ENCODE measurements at regions of chr12 and their contacts with region 1.

Region 1: GRCh38 chr12:121823101-121823726 is 19.4 kb downstream of the SETD1B start:
- DNase-seq: no peak
- ATAC-seq: peak; percentile 6 to 13

Region 2: DNA sequence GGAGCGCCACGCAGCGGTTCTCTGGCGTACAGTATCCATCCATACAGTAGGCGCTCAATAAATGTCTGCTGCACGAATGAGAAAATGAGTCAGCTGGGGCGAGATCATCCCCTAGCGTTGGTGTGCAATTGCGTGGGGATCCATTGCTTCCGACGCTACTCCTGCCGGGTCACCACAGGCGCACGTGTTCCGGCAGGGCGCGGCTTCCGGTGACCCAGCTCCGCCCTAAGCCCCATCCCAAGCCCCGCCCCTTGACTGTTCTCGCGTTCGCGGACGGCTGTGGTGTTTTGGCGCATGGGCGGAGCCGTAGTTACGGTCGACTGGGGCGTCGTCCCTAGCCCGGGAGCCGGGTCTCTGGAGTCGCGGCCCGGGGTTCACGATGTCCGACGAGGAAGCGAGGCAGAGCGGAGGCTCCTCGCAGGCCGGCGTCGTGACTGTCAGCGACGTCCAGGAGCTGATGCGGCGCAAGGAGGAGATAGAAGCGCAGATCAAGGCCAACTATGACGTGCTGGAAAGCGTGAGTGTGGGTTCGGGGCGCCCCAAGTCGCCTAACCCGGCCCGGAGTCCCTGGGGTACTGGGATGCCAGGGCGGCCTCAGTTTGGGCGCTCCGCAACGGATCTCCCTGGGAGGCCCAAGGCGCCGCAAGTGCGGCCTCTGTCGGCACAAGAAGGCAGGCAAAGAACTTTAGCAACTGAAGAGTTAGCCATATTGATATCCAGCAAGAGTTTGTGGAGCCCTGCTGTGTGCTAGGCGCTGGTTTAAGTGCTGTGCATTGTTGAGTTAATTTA is 65.5 kb after region 1 on chr12 and contains the start of gene PSMD9:
- intact Hi-C with region 1: loop called in 1 of 2 experiments (anchors 10 kb)
- DNase-seq: peak; percentile 98
- ATAC-seq: peak; percentile 99
- total RNA-seq, gene PSMD9: 33.2 to 34.1 TPM

Region 3: DNA sequence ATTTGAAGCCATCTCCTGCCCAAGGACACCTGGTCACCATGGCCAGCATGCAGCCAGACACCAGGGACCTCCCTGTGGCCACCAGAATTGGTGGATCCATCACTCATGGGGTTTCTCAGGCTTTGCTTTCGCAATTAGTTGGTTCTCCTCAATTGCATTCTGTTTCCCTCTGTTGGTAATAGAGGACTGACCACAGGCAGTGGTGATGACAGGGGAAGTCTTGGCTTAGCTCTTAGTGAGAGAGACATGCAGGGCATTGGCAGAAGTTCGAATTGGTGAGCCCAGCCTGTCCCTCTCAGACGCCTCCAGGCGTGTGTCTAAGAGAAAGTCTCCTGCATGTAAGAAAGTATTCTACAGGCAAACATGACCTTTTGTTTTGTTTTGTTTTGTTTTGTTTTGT is 858.6 kb after region 1 on chr12:
- intact Hi-C with region 1: no loop called
- DNase-seq: no peak
- ATAC-seq: peak in 1 of 2 donors; percentile 80

Measured in left cardiac atrium (tissue), 4 donors.